HEK293 (cell line): ENCODE measurements at regions of chr5 and their contacts with region 1.

Region 1: GRCh38 chr5:133423618-133424282 is 188.6 kb downstream of the FSTL4 start:
- H3K4me3 ChIP-seq: no peak overlapping the region
- H3K27ac ChIP-seq: no peak overlapping the region
- H3K4me1 ChIP-seq: no peaks in the 10 kb centered on the region
- CTCF ChIP-seq: peak; percentile 85

Region 2: GRCh38 chr5:133398646-133399101 is 25.1 kb before region 1 on chr5:
- CTCF ChIA-PET with region 1: interaction called, 15 read pairs
- POLR2A ChIA-PET with region 1: no interaction called
- H3K4me3 ChIP-seq: no peak overlapping the region
- H3K27ac ChIP-seq: no peak overlapping the region
- H3K4me1 ChIP-seq: no peaks in the 10 kb centered on the region
- CTCF ChIP-seq: no peak

Region 3: GRCh38 chr5:133406977-133407678 is 16.6 kb before region 1 on chr5:
- CTCF ChIA-PET with region 1: interaction called, 10 read pairs
- POLR2A ChIA-PET with region 1: no interaction called
- H3K4me3 ChIP-seq: no peak overlapping the region
- H3K27ac ChIP-seq: no peak overlapping the region
- H3K4me1 ChIP-seq: no peaks in the 10 kb centered on the region
- CTCF ChIP-seq: no peak

Region 4: DNA sequence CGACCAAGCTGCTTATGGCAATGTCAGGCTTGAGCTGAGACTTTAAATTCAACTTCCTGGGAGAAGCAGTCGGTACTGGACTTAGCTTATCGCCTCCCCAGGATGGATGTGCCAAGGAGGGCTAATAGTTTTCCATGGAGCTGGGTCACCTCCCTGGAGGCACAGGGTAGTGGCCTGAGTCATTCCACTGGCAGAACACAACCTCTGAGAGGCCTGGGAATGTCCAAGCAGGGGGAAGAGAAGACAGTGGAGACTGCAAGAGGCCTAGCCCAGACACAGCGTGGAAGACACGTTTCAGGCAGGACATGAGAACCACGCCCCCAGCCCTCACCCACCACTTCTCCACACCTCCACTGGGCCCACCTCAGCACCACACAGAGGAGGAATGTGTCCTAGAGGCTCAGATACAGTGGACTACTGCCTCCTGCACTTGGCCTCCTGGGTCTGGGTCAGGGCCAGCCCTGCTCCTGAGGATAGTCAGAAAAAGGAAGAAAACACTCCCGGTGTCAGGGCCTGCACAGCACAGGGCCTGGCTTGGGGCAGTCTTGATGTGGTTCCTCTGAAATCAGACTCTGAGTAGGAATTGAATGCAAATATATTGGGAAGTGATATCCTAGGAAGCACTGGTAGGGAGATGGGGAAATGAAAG is 16.8 kb after region 1 on chr5:
- CTCF ChIA-PET with region 1: interaction called, 45 read pairs
- POLR2A ChIA-PET with region 1: no interaction called
- H3K4me3 ChIP-seq: no peak overlapping the region
- H3K27ac ChIP-seq: no peak overlapping the region
- H3K4me1 ChIP-seq: no peaks in the 10 kb centered on the region
- CTCF ChIP-seq: no peak

Region 5: GRCh38 chr5:133460172-133460758 is 36.5 kb after region 1 on chr5:
- CTCF ChIA-PET with region 1: interaction called, 12 read pairs
- POLR2A ChIA-PET with region 1: no interaction called
- H3K4me3 ChIP-seq: no peak overlapping the region
- H3K27ac ChIP-seq: no peak overlapping the region
- H3K4me1 ChIP-seq: no peaks in the 10 kb centered on the region
- CTCF ChIP-seq: peak; percentile 46; the same call in 1 of the 2 replicates

Region 6: DNA sequence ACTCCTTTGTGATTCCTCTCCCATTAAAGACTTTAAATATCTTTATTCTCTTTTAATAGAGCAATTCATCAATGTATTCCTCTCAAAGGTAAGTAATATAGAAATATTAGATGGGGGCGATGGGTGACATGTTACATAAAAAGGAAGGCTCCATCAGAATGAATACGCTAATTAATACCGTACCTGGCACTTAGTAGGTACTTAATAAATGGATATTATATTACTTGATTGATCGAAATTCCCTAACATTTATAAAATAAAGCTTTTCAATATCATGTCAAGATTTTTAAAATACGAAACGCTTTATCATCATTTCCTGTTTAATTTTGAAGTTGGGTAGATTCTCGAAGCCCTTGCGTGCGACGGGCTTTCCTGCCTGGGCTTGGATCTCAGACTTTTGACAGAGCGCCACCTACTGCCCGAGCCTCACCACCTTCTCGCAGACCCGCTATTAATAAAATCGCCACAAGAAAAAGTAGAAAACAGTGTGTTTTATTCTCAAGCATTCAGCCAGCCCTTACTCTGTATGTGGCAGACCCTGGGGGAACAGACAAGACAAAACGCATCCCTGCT is 445.3 kb after region 1 on chr5:
- CTCF ChIA-PET with region 1: interaction called, 12 read pairs
- POLR2A ChIA-PET with region 1: no interaction called
- H3K4me3 ChIP-seq: no peak overlapping the region
- H3K27ac ChIP-seq: no peak overlapping the region
- H3K4me1 ChIP-seq: no peaks in the 10 kb centered on the region; the same call in 1 of the 2 replicates
- CTCF ChIP-seq: peak; percentile 66

Region 7: GRCh38 chr5:133944263-133945185 is 520.8 kb after region 1 on chr5:
- CTCF ChIA-PET with region 1: interaction called, 29 read pairs
- POLR2A ChIA-PET with region 1: no interaction called
- H3K4me3 ChIP-seq: no peak overlapping the region
- H3K27ac ChIP-seq: no peak overlapping the region
- H3K4me1 ChIP-seq: no peaks in the 10 kb centered on the region
- CTCF ChIP-seq: peak; percentile 65; the same call in 1 of the 2 replicates